ENCODE measurements at regions of chr2 and their contacts with region 1.

Region 1: GRCh38 chr2:102240640-102241370 is 54.0 kb downstream of the IL1RL2 start:
- DNase-seq: peak; percentile 84 to 93
- H3K4me3 ChIP-seq: no peak overlapping the region
- H3K27ac ChIP-seq: no peak overlapping the region
- H3K4me1 ChIP-seq: no peaks in the 10 kb centered on the region
- H3K27me3 ChIP-seq: no peaks in the 10 kb centered on the region
- CTCF ChIP-seq: peak; percentile 94 to 97 (median 97)
- EP300 ChIP-seq: 0 out of 3 replicates have a peak, but pooled peaks of 1 of the 2 experiments have one; percentile 30
- POLR2A ChIP-seq: no peak
- RAD21 ChIP-seq: peak; percentile 90

Region 2: DNA sequence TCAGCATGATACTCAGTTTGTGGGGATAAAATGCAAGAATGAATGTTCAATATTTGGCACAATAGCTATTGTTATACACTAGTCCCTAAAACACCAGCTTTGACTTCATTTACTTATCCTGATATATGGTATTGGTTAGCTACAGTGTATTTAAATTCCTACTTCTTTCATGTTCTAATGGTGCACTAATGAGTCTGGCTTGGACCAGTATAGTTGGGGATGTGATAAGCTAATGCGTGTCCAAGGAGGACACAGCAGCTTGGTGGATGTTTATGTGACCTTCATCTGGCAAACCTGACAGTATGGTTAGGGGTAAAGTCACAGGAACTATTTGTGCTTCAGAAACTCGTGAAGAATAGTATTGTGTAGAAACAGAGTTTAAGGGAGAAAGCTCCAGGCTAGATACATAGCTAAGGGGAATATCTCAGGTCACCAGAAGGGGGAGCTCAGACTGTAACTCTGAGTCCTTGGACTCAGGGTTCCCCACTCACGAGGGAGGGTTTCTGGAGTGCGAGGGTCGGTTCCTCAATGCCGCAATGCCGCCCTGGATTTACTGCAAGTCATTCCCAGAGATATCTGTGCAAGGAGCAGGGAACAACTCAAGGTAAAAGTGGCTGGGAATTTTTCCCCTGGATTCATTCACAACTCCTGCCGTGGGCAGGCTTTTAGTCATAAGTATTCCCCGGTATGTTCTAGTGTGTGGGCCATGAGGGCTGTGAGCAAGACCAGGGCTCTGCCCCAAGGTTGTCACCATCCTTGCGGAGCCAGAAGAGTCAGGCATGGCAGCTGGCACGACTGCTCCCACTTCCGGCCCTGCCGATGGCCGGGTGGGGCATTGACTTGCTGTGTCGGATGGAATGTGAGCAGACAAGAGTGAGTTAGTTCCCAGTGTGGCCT is 234.6 kb before region 1 on chr2:
- CTCF ChIA-PET with region 1: interaction called, 11 read pairs
- POLR2A ChIA-PET with region 1: no interaction called
- DNase-seq: peak; percentile 9 to 67
- H3K4me3 ChIP-seq: no peak overlapping the region
- H3K27ac ChIP-seq: no peak overlapping the region
- H3K4me1 ChIP-seq: no peaks in the 10 kb centered on the region
- H3K27me3 ChIP-seq: no peaks in the 10 kb centered on the region; a peak in 2 of 7 replicates
- CTCF ChIP-seq: peak; percentile 48 to 84 (median 74)
- EP300 ChIP-seq: no peak
- POLR2A ChIP-seq: no peak
- RAD21 ChIP-seq: peak; percentile 70 to 80

Region 3: DNA sequence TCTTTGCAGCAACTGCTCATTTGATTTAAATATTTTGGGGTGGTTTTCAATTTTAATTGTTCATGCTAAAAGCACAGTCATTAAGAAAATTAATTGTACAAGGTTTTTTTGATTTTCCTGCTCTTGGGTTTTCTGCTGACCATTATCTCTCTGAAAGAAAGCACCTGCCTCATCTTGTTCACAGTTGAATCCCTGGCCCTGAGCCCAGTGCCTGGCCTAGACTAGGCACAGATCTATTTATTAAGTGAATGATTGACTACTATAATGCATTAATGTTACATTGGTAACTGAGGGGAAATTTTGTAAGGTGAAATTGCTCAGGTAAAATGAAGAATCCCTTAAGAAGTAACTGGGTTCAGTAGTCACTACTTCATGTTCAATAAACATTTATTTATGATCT is 32.0 kb before region 1 on chr2:
- CTCF ChIA-PET with region 1: interaction called, 14 read pairs
- POLR2A ChIA-PET with region 1: no interaction called
- DNase-seq: no peak
- H3K4me3 ChIP-seq: no peak overlapping the region
- H3K27ac ChIP-seq: no peak overlapping the region
- H3K4me1 ChIP-seq: no peaks in the 10 kb centered on the region
- H3K27me3 ChIP-seq: no peaks in the 10 kb centered on the region
- CTCF ChIP-seq: no peak
- EP300 ChIP-seq: no peak
- POLR2A ChIP-seq: no peak
- RAD21 ChIP-seq: no peak

Region 4: DNA sequence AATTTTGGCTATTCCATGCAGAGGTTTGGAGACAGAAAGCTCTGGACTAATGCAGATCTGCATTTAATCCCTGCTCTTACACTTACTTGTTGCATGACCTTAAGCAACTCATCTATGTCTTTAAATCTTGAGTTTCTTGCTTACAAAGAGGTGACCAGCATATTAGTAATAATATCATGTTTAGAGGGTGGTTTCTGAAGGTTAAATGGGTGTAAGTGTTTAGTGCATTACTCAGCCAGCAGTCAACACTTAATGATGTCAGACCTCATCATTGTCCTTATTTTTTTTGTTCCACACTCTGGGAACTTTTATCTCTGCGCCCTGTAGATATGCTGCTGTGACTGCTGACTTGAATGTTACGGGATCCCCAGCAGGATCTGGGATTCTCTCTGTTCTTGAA is 72.2 kb after region 1 on chr2:
- CTCF ChIA-PET with region 1: no interaction called
- POLR2A ChIA-PET with region 1: no interaction called
- DNase-seq: no peak
- H3K4me3 ChIP-seq: no peak overlapping the region
- H3K27ac ChIP-seq: no peak overlapping the region
- H3K4me1 ChIP-seq: no peaks in the 10 kb centered on the region
- H3K27me3 ChIP-seq: no peaks in the 10 kb centered on the region
- CTCF ChIP-seq: no peak
- EP300 ChIP-seq: no peak
- POLR2A ChIP-seq: no peak
- RAD21 ChIP-seq: no peak

Region 5: GRCh38 chr2:102442967-102443828 is 202.4 kb after region 1 on chr2:
- CTCF ChIA-PET with region 1: interaction called, 24 read pairs
- POLR2A ChIA-PET with region 1: no interaction called
- DNase-seq: no peak
- H3K4me3 ChIP-seq: no peak overlapping the region
- H3K27ac ChIP-seq: no peak overlapping the region
- H3K4me1 ChIP-seq: peaks cover 0 to 3% (median 0%) of the 10 kb centered on the region in 4 experiments; a peak in 1 of 7 replicates
- H3K27me3 ChIP-seq: no peaks in the 10 kb centered on the region
- CTCF ChIP-seq: peak in 2 of 3 experiments; percentile 65 to 69; a peak in 3 of 4 replicates
- EP300 ChIP-seq: no peak
- POLR2A ChIP-seq: no peak
- RAD21 ChIP-seq: peak; percentile 72 to 79

Region 6: GRCh38 chr2:102657770-102658169 is 417.0 kb after region 1 on chr2:
- CTCF ChIA-PET with region 1: no interaction called
- POLR2A ChIA-PET with region 1: no interaction called
- DNase-seq: no peak
- H3K4me3 ChIP-seq: no peak overlapping the region
- H3K27ac ChIP-seq: no peak overlapping the region
- H3K4me1 ChIP-seq: no peaks in the 10 kb centered on the region
- H3K27me3 ChIP-seq: peaks cover 0 to 2% (median 0%) of the 10 kb centered on the region in 4 experiments; a peak in 1 of 7 replicates
- CTCF ChIP-seq: no peak
- EP300 ChIP-seq: no peak
- POLR2A ChIP-seq: no peak
- RAD21 ChIP-seq: no peak